B cell (primary cell): ENCODE measurements at regions of chr10 and their contacts with region 1.

Region 1: GRCh38 chr10:11165591-11166543 is 148.2 kb downstream of the CELF2 start:
- DNase-seq: peak; percentile 84
- ATAC-seq: peak; percentile 48
- H3K4me3 ChIP-seq: peak overlapping the region; percentile 71 to 99 (median 94)
- H3K4me3 Mint-ChIP-seq: no peak overlapping the region
- H3K27ac ChIP-seq: peak overlapping the region; percentile 84 to 87
- H3K27ac Mint-ChIP-seq: peak overlapping the region; percentile 98
- H3K4me1 ChIP-seq: peaks cover 65 to 69% of the 10 kb centered on the region in 2 donors
- H3K4me1 Mint-ChIP-seq: peaks cover 45% of the 10 kb centered on the region
- H3K27me3 ChIP-seq: no peaks in the 10 kb centered on the region
- H3K27me3 Mint-ChIP-seq: no peaks in the 10 kb centered on the region
- CTCF ChIP-seq: peak; percentile 79

Region 2: DNA sequence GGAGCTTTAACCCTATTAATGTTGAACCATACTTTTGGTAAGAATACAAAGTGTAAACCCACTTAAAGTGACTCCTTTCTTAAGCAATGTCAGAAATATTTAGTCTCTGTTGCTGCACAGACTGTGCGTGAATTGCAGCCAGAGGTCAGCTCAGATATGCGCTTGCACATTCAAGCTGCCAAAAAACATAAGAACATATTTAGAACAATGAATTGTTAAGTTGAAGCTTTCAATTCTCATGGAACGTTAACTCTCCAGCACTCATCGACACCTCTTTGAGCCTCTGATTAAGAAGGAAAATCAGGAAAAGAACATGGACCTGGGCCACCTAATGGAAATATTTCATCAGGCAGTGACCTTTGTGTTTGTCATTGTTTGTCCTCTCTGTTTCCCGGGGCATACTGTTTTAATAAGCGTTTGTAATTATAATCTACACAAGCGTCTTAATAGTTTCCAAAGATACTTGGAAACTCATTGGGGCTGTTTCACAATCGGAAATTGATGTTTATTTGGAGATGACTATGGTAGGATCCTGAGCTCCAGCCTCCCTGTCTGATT is 341.2 kb before region 1 on chr10:
- CTCF ChIA-PET with region 1: no interaction called
- POLR2A ChIA-PET with region 1: no interaction called
- intact Hi-C with region 1: no loop called
- DNase-seq: no peak
- ATAC-seq: no peak
- H3K4me3 ChIP-seq: no peak overlapping the region
- H3K4me3 Mint-ChIP-seq: no peak overlapping the region
- H3K27ac ChIP-seq: no peak overlapping the region
- H3K27ac Mint-ChIP-seq: no peak overlapping the region
- H3K4me1 ChIP-seq: no peaks in the 10 kb centered on the region
- H3K4me1 Mint-ChIP-seq: no peaks in the 10 kb centered on the region
- H3K27me3 ChIP-seq: peaks cover 0 to 5% (median 0%) of the 10 kb centered on the region in 4 experiments
- H3K27me3 Mint-ChIP-seq: peaks cover 21% of the 10 kb centered on the region
- CTCF ChIP-seq: no peak

Region 3: DNA sequence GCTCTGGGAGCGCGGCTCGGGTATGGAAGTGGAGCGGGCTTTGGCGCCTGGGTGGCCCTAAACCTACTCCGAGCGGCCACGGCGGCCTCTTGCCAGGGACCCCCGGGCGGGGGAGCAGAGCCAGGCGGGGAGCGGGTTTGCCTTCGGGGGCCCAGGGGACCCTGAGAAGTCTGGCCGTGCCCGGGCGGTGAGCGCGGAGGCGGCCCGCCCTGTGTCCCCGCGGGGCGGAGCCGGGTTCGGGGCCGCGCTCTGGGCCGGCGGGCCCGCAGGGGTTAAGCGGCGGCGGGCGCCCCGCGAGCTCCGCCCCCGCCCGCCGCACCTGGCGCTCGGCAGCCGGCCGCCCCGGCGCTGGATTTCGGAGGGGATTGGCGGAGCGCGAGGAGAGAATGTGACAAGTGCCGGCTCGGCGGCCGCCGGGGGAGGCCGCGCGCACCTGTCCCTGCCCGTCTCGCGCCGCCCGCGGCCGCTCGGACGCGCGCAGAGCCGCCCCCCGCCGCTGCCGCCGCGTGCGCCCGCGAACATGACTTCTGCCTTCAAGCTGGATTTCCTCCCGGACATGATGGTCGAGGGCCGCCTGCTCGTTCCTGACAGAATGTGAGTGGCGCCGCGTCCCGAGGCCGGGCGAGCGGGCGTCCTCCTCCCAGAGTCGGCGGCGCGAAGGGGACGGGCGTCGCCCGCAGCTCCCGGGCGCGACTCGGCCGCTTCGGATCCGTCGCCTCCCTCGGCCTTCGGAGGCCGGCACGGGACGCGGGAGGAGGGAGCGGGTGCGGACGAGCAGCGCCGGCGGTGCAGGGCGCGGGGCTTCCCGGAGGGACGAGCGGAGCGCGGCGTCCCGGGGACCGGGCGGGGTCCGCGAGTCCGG is 148.1 kb before region 1 on chr10 and contains the start of gene CELF2:
- CTCF ChIA-PET with region 1: no interaction called
- POLR2A ChIA-PET with region 1: no interaction called
- intact Hi-C with region 1: loop called (anchors 5 kb)
- DNase-seq: peak; percentile 67
- ATAC-seq: peak; percentile 79
- H3K4me3 ChIP-seq: peak within 1 kb of the TSS; percentile 18 to 58 (median 49)
- H3K4me3 Mint-ChIP-seq: peak within 1 kb of the TSS; percentile 85
- H3K27ac ChIP-seq: no peak within 1 kb of the TSS
- H3K27ac Mint-ChIP-seq: no peak within 1 kb of the TSS
- H3K4me1 ChIP-seq: peaks cover 8 to 16% of the 10 kb centered on the region in 2 donors
- H3K4me1 Mint-ChIP-seq: peaks cover 18% of the 10 kb centered on the region
- H3K27me3 ChIP-seq: peaks cover 0 to 66% (median 40%) of the 10 kb centered on the region in 4 experiments
- H3K27me3 Mint-ChIP-seq: peaks cover 74% of the 10 kb centered on the region
- CTCF ChIP-seq: no peak
- total RNA-seq, gene CELF2: 112 and 114 TPM in 2 replicates

Region 4: GRCh38 chr10:11145495-11145855 is 20.4 kb before region 1 on chr10:
- CTCF ChIA-PET with region 1: interaction called, 139 read pairs
- POLR2A ChIA-PET with region 1: interaction called, 34 read pairs
- intact Hi-C with region 1: loop called (anchors 1 kb)
- DNase-seq: peak; percentile 70
- ATAC-seq: peak; percentile 75
- H3K4me3 ChIP-seq: peak overlapping the region in 4 of 5 experiments; percentile 7 to 33 (median 22)
- H3K4me3 Mint-ChIP-seq: peak overlapping the region; percentile 68
- H3K27ac ChIP-seq: peak overlapping the region; percentile 33 to 76
- H3K27ac Mint-ChIP-seq: peak overlapping the region; percentile 85
- H3K4me1 ChIP-seq: peaks cover 84 to 89% of the 10 kb centered on the region in 2 donors
- H3K4me1 Mint-ChIP-seq: peaks cover 90% of the 10 kb centered on the region
- H3K27me3 ChIP-seq: no peaks in the 10 kb centered on the region
- H3K27me3 Mint-ChIP-seq: no peaks in the 10 kb centered on the region
- CTCF ChIP-seq: no peak

Region 5: DNA sequence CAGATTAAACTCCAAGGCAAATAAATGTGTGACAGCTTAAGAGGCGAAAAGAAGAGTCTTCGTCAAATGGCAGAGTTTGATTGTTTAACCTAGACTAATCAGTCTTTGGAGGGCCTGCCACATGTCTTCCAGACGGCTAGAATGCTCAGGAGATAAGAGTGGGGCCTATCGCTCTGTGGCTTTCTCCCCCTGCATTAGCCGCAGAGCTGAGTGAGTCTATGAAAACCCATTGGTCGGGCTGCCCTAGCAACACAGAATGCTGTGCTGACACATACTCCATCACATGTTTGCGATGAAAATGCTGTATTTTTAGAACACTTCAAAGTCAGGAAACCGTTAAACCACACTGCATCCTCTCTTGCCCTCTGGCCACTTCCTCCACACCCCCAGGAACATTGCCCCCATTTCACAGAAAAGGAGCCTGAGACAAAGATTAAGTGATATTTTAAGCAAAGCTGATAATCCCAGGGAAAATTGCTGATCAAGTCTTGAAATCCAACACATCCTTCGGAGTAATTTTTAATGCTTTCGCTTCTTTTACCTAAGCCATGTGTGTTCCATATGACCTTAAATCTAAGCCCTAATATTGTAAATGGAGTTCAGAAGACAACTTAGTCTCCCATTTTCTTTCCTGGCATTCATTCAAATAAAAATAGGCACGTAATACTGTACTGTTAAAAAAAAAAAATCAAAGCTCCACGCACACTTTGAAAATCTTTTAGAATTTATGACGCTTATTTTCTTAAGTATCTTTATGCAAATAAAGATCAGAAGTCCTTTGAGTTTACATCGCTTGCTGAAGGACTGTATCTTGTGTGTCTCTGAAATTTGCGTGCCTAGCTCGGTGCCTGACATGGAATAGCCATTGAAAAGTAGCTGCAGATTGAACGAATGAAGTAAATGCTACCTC is 13.0 kb after region 1 on chr10:
- CTCF ChIA-PET with region 1: interaction called, 85 read pairs
- POLR2A ChIA-PET with region 1: interaction called, 37 read pairs
- intact Hi-C with region 1: loop called (anchors 1 kb)
- DNase-seq: peak; percentile 85
- ATAC-seq: peak; percentile 73
- H3K4me3 ChIP-seq: peak overlapping the region in 4 of 5 experiments; percentile 3 to 43 (median 18)
- H3K4me3 Mint-ChIP-seq: peak overlapping the region; percentile 81
- H3K27ac ChIP-seq: peak overlapping the region; percentile 63 to 87
- H3K27ac Mint-ChIP-seq: peak overlapping the region; percentile 94
- H3K4me1 ChIP-seq: peaks cover 96% of the 10 kb centered on the region in 2 donors
- H3K4me1 Mint-ChIP-seq: peaks cover 97% of the 10 kb centered on the region
- H3K27me3 ChIP-seq: no peaks in the 10 kb centered on the region
- H3K27me3 Mint-ChIP-seq: no peaks in the 10 kb centered on the region
- CTCF ChIP-seq: no peak

Region 6: DNA sequence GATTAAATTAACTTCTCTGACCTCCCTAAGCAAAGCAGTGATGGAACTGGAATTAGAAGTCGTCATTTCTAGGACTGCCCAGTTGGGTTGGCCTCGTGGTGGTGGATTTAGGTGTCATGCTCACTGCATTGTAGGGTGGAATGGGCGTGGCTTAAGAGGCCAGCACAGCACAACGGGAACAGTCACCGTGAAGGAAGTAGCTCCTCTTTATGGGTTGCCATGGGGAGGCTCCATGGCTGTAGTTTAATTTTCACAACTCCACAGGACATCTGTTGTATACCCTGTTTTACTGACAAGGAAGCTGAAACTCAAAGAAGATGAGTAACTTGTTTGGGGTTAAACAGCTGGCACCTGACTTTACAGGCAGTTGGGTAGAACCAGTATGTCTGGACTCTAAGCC is 60.1 kb after region 1 on chr10:
- CTCF ChIA-PET with region 1: interaction called, 30 read pairs
- POLR2A ChIA-PET with region 1: interaction called, 5 read pairs
- intact Hi-C with region 1: loop called (anchors 1 kb)
- DNase-seq: peak; percentile 55
- ATAC-seq: peak; percentile 8
- H3K4me3 ChIP-seq: peak overlapping the region in 1 of 5 experiments; percentile 27
- H3K4me3 Mint-ChIP-seq: peak overlapping the region; percentile 58
- H3K27ac ChIP-seq: peak overlapping the region; percentile 72 to 87
- H3K27ac Mint-ChIP-seq: peak overlapping the region; percentile 92
- H3K4me1 ChIP-seq: peaks cover 62 to 63% of the 10 kb centered on the region in 2 donors
- H3K4me1 Mint-ChIP-seq: peaks cover 78% of the 10 kb centered on the region
- H3K27me3 ChIP-seq: no peaks in the 10 kb centered on the region
- H3K27me3 Mint-ChIP-seq: no peaks in the 10 kb centered on the region
- CTCF ChIP-seq: no peak

Region 7: DNA sequence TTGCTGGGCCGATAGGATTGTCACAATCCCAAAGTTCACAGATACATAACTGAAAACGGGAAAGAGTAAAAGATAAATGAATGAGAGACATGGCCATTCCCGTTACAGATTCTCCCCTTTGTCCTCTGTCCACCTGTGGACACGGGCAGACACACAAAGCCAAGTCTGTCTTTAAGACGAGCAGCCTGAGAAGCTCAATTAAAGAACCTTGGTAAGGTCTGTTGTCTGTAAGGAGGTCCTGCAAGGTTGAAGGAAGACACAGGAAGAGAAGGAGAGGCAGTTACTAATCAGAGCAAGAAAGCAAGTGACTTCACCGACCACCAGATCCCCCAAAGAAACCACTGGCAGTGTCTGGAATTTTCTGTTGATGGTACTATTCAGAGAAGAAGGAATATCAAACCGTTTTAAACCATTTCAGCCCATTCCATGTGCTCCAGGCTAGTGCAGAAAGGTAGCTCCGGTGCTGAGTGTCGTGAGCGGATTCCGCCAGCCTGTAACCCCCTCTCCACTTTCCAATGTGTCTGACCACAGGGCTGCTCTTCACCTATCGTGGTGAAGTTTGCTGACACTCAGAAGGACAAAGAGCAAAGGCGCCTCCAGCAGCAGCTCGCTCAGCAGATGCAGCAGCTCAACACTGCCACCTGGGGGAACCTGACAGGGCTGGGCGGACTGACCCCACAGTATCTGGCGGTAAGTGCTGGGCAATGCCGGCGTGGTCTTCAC is 104.4 kb after region 1 on chr10:
- CTCF ChIA-PET with region 1: interaction called, 13 read pairs
- POLR2A ChIA-PET with region 1: no interaction called
- intact Hi-C with region 1: no loop called
- DNase-seq: peak; percentile 72
- ATAC-seq: peak; percentile 87
- H3K4me3 ChIP-seq: no peak overlapping the region
- H3K4me3 Mint-ChIP-seq: no peak overlapping the region
- H3K27ac ChIP-seq: peak overlapping the region in 1 of 2 donors; percentile 51
- H3K27ac Mint-ChIP-seq: peak overlapping the region; percentile 28
- H3K4me1 ChIP-seq: peaks cover 30 to 37% of the 10 kb centered on the region in 2 donors
- H3K4me1 Mint-ChIP-seq: peaks cover 43% of the 10 kb centered on the region
- H3K27me3 ChIP-seq: no peaks in the 10 kb centered on the region
- H3K27me3 Mint-ChIP-seq: no peaks in the 10 kb centered on the region
- CTCF ChIP-seq: peak; percentile 86